ENCODE measurements at regions of chr18 and their contacts with region 1.

Region 1: GRCh38 chr18:31042437-31043181 is at the start of gene DSC3:
- DNase-seq: peak; percentile 97
- H3K4me3 ChIP-seq: peak within 1 kb of the TSS; percentile 55 to 86 (median 61)
- H3K27ac ChIP-seq: peak within 1 kb of the TSS; percentile 88
- H3K4me1 ChIP-seq: peaks cover 41% of the 10 kb centered on the region
- H3K27me3 ChIP-seq: no peaks in the 10 kb centered on the region
- CTCF ChIP-seq: peak in 1 of 2 donors; percentile 18
- total RNA-seq, gene DSC3: 125 to 272 TPM

Region 2: DNA sequence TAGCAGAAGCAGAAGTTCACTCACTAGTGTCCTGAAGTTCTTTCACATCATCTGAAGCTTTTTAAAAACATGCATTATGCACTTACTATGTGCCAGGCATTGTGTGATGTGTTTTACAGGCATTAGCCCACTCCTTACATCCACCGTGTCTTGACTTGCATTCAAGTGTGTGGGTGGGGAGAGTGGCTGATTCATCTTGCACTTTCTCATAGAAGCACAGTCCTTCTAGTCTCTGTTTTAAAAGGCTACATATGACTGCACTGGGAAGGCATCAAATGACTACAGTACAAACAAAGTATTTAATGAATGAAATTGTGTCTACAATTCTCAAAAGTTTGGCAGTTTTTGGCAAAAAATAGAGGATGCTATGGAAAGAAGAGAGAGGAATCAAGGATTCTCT is 21.5 kb after region 1 on chr18:
- CTCF ChIA-PET with region 1: no interaction called
- dilution Hi-C with region 1: no loop called
- in situ Hi-C with region 1: no loop called
- intact Hi-C with region 1: loop called (anchors 2 kb)
- DNase-seq: peak; percentile 95
- H3K4me3 ChIP-seq: no peak overlapping the region
- H3K27ac ChIP-seq: peak overlapping the region; percentile 71
- H3K4me1 ChIP-seq: peaks cover 23% of the 10 kb centered on the region
- H3K27me3 ChIP-seq: no peaks in the 10 kb centered on the region
- CTCF ChIP-seq: no peak

Region 3: GRCh38 chr18:31454066-31454708 is 411.6 kb after region 1 on chr18:
- CTCF ChIA-PET with region 1: no interaction called
- dilution Hi-C with region 1: no loop called
- in situ Hi-C with region 1: no loop called
- intact Hi-C with region 1: loop called (anchors 2 kb)
- DNase-seq: peak; percentile 95
- H3K4me3 ChIP-seq: peak overlapping the region in 2 of 3 experiments; percentile 12 to 18
- H3K27ac ChIP-seq: peak overlapping the region; percentile 99
- H3K4me1 ChIP-seq: peaks cover 39% of the 10 kb centered on the region
- H3K27me3 ChIP-seq: no peaks in the 10 kb centered on the region
- CTCF ChIP-seq: no peak

Measured in mammary epithelial cell (primary cell).